Endothelial cell of umbilical vein (primary cell): ENCODE measurements at regions of chr18 and their contacts with region 1.

Region 1: GRCh38 chr18:23231340-23232021 is 96.2 kb downstream of the CABLES1 start:
- DNase-seq: peak; percentile 97
- H3K4me3 ChIP-seq: no peak overlapping the region
- H3K27ac ChIP-seq: peak overlapping the region; percentile 90
- H3K4me1 ChIP-seq: peaks cover 50% of the 10 kb centered on the region
- H3K27me3 ChIP-seq: no peaks in the 10 kb centered on the region
- CTCF ChIP-seq: no peak
- POLR2A ChIP-seq: peak; percentile 27

Region 2: GRCh38 chr18:23183411-23184155 is 47.9 kb before region 1 on chr18:
- CTCF ChIA-PET with region 1: interaction called, 4 read pairs
- POLR2A ChIA-PET with region 1: no interaction called
- dilution Hi-C with region 1: no loop called
- intact Hi-C with region 1: loop called (anchors 2 kb)
- DNase-seq: no peak
- H3K4me3 ChIP-seq: no peak overlapping the region
- H3K27ac ChIP-seq: no peak overlapping the region
- H3K4me1 ChIP-seq: peaks cover 23% of the 10 kb centered on the region
- H3K27me3 ChIP-seq: no peaks in the 10 kb centered on the region
- CTCF ChIP-seq: no peak
- POLR2A ChIP-seq: no peak

Region 3: DNA sequence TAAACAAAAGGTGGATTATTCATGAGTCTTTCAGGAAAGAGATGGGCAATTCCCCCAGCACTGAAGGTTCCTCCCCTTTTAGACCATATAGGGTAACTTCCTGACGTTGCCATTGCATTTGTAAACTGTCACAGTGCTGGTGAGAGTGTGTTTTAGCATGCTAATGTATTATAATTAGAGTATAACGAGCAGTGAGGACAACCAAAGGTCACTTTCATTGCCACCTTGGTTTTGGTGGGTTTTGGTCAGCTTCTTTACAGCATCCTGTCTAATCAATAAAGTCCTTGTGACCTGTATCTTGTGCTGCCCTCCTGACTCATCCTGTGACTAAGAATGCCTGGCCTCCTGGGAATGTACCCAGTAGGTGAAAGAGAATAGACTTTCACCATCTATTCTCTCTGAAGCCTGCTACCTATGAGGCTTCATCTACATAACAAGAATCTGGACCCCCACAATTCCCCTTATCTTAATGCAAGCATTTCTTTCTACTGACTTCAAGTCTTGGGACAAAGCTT is 52.5 kb after region 1 on chr18:
- CTCF ChIA-PET with region 1: interaction called, 3 read pairs
- POLR2A ChIA-PET with region 1: no interaction called
- dilution Hi-C with region 1: no loop called
- intact Hi-C with region 1: loop called (anchors 1 kb)
- DNase-seq: peak; percentile 52
- H3K4me3 ChIP-seq: no peak overlapping the region
- H3K27ac ChIP-seq: no peak overlapping the region
- H3K4me1 ChIP-seq: peaks cover 41% of the 10 kb centered on the region
- H3K27me3 ChIP-seq: no peaks in the 10 kb centered on the region
- CTCF ChIP-seq: no peak
- POLR2A ChIP-seq: no peak

Region 4: GRCh38 chr18:23377669-23378301 is 146.3 kb after region 1 on chr18:
- CTCF ChIA-PET with region 1: interaction called, 29 read pairs
- POLR2A ChIA-PET with region 1: no interaction called
- dilution Hi-C with region 1: no loop called
- intact Hi-C with region 1: loop called (anchors 1 kb)
- DNase-seq: peak; percentile 90
- H3K4me3 ChIP-seq: no peak overlapping the region
- H3K27ac ChIP-seq: peak overlapping the region; percentile 78
- H3K4me1 ChIP-seq: peaks cover 36% of the 10 kb centered on the region
- H3K27me3 ChIP-seq: no peaks in the 10 kb centered on the region
- CTCF ChIP-seq: no peak
- POLR2A ChIP-seq: no peak